Right lobe of liver (tissue), 6 donors: ENCODE measurements at regions of chr2 and their contacts with region 1.

Region 1: DNA sequence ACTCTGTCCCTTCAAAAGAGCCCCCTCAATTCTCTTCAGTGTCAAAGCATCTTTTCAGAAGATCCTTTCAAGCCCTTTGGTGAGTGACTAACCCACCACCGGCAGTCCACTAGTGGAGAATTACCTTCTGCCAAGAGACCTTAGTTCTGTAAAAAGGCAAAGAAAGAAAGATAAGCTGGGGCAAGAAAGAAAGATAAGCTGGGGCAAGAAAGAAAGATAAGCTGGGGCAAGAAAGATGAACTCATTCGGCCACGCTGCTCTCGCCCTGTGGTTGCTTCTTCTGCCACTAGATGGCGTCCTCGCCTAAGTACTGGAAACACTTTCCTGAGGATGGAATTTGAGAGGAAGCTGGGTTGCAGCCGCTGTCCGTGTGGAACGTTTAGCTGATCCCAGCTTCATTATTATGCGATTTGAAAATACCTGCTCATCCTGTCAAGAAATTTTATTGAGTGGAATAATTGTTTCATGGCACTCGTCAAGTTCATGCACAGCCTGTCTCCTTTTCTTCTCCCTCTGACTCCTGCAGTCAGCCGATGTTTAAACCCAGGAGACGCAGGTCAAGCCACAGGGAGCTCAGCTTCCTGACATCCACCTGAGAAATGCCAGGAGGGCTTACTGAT is 17.3 kb upstream of the ANXA4 start:
- DNase-seq: peak; percentile 79 to 85 (median 82)
- ATAC-seq: peak; percentile 97 to 100 (median 98)
- H3K4me3 ChIP-seq: peak overlapping the region in 2 of 3 donors; percentile 25 to 41
- H3K27ac ChIP-seq: no peak overlapping the region
- H3K4me1 ChIP-seq: no peaks in the 10 kb centered on the region
- H3K27me3 ChIP-seq: no peaks in the 10 kb centered on the region
- CTCF ChIP-seq: peak; percentile 95 to 97 (median 96)
- POLR2A ChIP-seq: no peak

Region 2: GRCh38 chr2:69816923-69817542 is 92.4 kb after region 1 on chr2:
- intact Hi-C with region 1: loop called in 1 of 2 experiments (anchors 5 kb)
- DNase-seq: peak in 1 of 3 donors; percentile 82
- ATAC-seq: peak; percentile 88 to 97 (median 94)
- H3K4me3 ChIP-seq: no peak overlapping the region
- H3K27ac ChIP-seq: peak overlapping the region in 1 of 3 donors; percentile 11
- H3K4me1 ChIP-seq: peaks cover 0 to 15% (median 8%) of the 10 kb centered on the region in 4 donors
- H3K27me3 ChIP-seq: no peaks in the 10 kb centered on the region
- CTCF ChIP-seq: peak; percentile 94 to 100 (median 96)
- POLR2A ChIP-seq: no peak